Right lobe of liver (tissue), 6 donors: ENCODE measurements at regions of chr7 and their contacts with region 1.

Region 1: GRCh38 chr7:151932358-151932876 is 23.8 kb upstream of the GALNTL5 start:
- DNase-seq: no peak
- ATAC-seq: peak; percentile 37 to 68 (median 52)
- H3K4me3 ChIP-seq: peak overlapping the region in 2 of 3 donors; percentile 21 to 43
- H3K27ac ChIP-seq: peak overlapping the region; percentile 69 to 93 (median 69)
- H3K4me1 ChIP-seq: peaks cover 0 to 13% (median 4%) of the 10 kb centered on the region in 4 donors
- H3K27me3 ChIP-seq: no peaks in the 10 kb centered on the region
- CTCF ChIP-seq: no peak
- POLR2A ChIP-seq: peak; percentile 55

Region 2: DNA sequence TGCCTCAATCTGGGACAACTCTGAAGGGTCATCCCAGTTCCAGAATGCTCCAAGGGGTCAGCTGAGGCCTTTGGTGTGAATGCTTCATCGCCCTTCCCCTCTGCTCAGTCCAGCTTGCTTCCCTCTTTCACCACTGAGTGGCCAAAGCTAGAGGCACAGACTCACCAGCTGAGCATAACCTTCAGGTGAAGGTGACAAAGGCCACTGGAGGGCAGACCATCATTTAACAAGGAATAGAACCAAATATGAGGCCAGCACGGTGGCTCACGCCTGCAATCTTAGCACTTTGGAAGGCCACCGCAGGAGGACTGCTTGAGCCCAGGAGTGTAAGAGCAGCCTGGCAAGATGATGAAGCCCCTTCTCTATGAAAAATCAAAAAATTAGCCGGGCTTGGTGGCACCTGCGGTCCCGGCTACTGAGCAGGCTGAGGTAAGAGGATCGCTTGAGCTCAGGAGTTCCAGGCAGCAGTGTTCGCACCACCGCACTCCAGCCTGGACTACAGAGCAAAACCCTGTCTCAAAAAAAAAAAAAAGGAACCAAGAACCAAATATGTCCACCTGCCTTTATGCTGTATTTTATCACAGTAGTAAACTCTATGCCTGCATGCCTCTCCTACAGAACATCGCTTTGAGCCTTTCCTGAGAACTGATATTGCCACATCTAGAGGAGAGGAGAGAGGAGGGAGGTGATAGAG is 68.9 kb before region 1 on chr7:
- intact Hi-C with region 1: loop called in 1 of 2 experiments (anchors 5 kb)
- DNase-seq: peak in 2 of 3 donors; percentile 43 to 59
- ATAC-seq: peak; percentile 44 to 68 (median 46)
- H3K4me3 ChIP-seq: no peak overlapping the region
- H3K27ac ChIP-seq: peak overlapping the region in 2 of 3 donors; percentile 57 to 94
- H3K4me1 ChIP-seq: peaks cover 0 to 85% (median 27%) of the 10 kb centered on the region in 4 donors
- H3K27me3 ChIP-seq: no peaks in the 10 kb centered on the region
- CTCF ChIP-seq: peak; percentile 30 to 59 (median 38)
- POLR2A ChIP-seq: no peak